Head of caudate nucleus (tissue), 42 donors: ENCODE measurements at regions of chr16 and their contacts with region 1.

Region 1: GRCh38 chr16:48542020-48542473 is 67.9 kb downstream of the N4BP1 start:
- DNase-seq: peak; percentile 46 to 88 (median 73)

Region 2: GRCh38 chr16:48353565-48354163 is 188.4 kb before region 1 on chr16:
- intact Hi-C with region 1: loop called (anchors 5 kb)
- DNase-seq: peak in 40 of 42 donors; percentile 29 to 87 (median 63)